ENCODE measurements at regions of chr9 and their contacts with region 1.

Region 1: GRCh38 chr9:19230356-19231125 is at the start of gene DENND4C:
- DNase-seq: peak; percentile 87
- ATAC-seq: peak; percentile 92
- H3K4me3 Mint-ChIP-seq: peak within 1 kb of the TSS; percentile 77
- H3K27ac Mint-ChIP-seq: peak within 1 kb of the TSS; percentile 72
- H3K4me1 Mint-ChIP-seq: peaks cover 4% of the 10 kb centered on the region
- H3K27me3 Mint-ChIP-seq: no peaks in the 10 kb centered on the region
- total RNA-seq, gene DENND4C: 44.4 to 49.5 TPM

Region 2: GRCh38 chr9:18896531-18897179 is 333.9 kb before region 1 on chr9:
- POLR2A ChIA-PET with region 1: no interaction called
- DNase-seq: no peak
- ATAC-seq: peak; percentile 91
- H3K4me3 Mint-ChIP-seq: no peak overlapping the region
- H3K27ac Mint-ChIP-seq: peak overlapping the region; percentile 65
- H3K4me1 Mint-ChIP-seq: peaks cover 3% of the 10 kb centered on the region
- H3K27me3 Mint-ChIP-seq: peaks cover 12% of the 10 kb centered on the region

Region 3: DNA sequence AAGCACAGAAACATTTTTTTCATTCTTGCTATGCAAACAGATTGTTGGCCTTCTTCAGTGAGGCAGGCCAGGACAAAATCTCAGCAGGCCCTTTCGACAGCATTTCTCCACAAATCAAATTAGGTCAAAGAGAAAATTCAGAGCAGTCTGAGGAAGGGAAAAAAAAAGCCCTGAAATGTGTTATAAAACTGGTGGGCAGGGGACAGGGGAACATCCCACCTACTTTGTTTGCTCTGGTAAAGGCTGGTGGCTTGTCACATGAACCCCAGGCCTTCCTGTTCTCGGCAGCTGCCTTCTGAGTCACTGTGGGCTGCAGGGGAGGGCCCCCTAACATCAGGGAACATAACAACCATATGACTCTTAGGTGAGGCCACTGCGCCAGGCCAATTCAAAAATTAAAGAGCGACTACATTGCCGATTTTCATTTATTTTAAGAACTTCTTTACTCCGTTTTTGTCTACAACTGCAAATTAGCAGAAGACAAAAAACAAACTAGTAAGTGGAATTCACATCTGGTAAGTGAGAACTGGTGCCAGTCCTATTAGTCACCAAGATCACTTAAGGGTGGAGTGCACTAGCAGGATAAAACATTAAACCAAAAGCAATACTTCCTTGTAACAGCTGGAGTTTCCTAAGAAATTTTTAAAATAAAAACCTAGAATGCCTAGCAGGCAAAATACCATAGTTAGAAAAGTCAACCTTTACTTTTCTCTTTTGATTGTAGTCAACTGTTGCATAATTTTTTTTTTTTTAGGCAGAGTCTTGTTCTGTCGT is 46.2 kb before region 1 on chr9:
- POLR2A ChIA-PET with region 1: interaction called, 14 read pairs
- DNase-seq: peak; percentile 70
- ATAC-seq: peak; percentile 100
- H3K4me3 Mint-ChIP-seq: peak overlapping the region; percentile 69
- H3K27ac Mint-ChIP-seq: peak overlapping the region; percentile 94
- H3K4me1 Mint-ChIP-seq: peaks cover 16% of the 10 kb centered on the region
- H3K27me3 Mint-ChIP-seq: no peaks in the 10 kb centered on the region

Region 4: GRCh38 chr9:19216466-19216865 is 14.1 kb before region 1 on chr9:
- POLR2A ChIA-PET with region 1: no interaction called
- DNase-seq: no peak
- ATAC-seq: no peak
- H3K4me3 Mint-ChIP-seq: no peak overlapping the region
- H3K27ac Mint-ChIP-seq: no peak overlapping the region
- H3K4me1 Mint-ChIP-seq: peaks cover 1% of the 10 kb centered on the region
- H3K27me3 Mint-ChIP-seq: peaks cover 4% of the 10 kb centered on the region

Region 5: DNA sequence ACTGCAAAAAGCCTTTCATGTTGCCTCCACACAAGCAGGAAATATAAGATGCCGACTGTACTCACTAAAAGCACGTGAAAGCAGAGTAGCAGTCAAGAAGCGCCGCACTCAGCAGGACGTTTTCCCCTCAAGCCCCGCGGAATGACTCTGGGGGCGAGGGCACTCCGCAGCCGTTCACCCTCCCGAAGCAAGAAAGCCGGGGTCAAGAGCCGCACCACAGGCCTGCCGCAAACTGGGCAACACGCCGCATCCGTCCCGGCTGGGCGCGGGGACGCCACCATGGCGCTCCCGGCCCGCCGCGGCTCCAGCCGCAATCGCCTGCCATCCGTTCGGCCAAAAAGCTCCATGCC is 149.1 kb after region 1 on chr9:
- POLR2A ChIA-PET with region 1: interaction called, 19 read pairs
- DNase-seq: no peak
- ATAC-seq: peak; percentile 48
- H3K4me3 Mint-ChIP-seq: peak overlapping the region; percentile 100
- H3K27ac Mint-ChIP-seq: peak overlapping the region; percentile 99
- H3K4me1 Mint-ChIP-seq: peaks cover 42% of the 10 kb centered on the region
- H3K27me3 Mint-ChIP-seq: no peaks in the 10 kb centered on the region